HepG2 (cell line): ENCODE measurements at regions of chr1 and their contacts with region 1.

Region 1: GRCh38 chr1:40849801-40850592 is 12.2 kb downstream of the CITED4 start:
- DNase-seq: peak; percentile 43
- ATAC-seq: peak; percentile 85
- H3K4me3 ChIP-seq: no peak overlapping the region
- H3K27ac ChIP-seq: no peak overlapping the region
- H3K4me1 ChIP-seq: peaks cover 22% of the 10 kb centered on the region; the same call in 1 of the 2 replicates
- H3K27me3 ChIP-seq: peaks cover 0 to 24% of the 10 kb centered on the region in 2 experiments; a peak in 2 of 5 replicates
- CTCF ChIP-seq: peak; percentile 89
- EP300 ChIP-seq: no peak
- POLR2A ChIP-seq: no peak
- RAD21 ChIP-seq: peak; percentile 78

Region 2: GRCh38 chr1:40612345-40612831 is 237.6 kb before region 1 on chr1:
- CTCF ChIA-PET with region 1: interaction called, 7 read pairs
- POLR2A ChIA-PET with region 1: no interaction called
- in situ Hi-C with region 1: no loop called
- intact Hi-C with region 1: loop called (anchors 1 kb)
- DNase-seq: peak; percentile 55
- ATAC-seq: peak; percentile 95
- H3K4me3 ChIP-seq: peak overlapping the region in 1 of 3 experiments; percentile 40; a peak in 1 of 6 replicates
- H3K27ac ChIP-seq: no peak overlapping the region
- H3K4me1 ChIP-seq: peaks cover 5% of the 10 kb centered on the region; the same call in 1 of the 2 replicates
- H3K27me3 ChIP-seq: peaks cover 0 to 3% of the 10 kb centered on the region in 2 experiments; a peak in 1 of 5 replicates
- CTCF ChIP-seq: peak; percentile 93
- EP300 ChIP-seq: no peak
- POLR2A ChIP-seq: no peak
- RAD21 ChIP-seq: peak; percentile 74

Region 3: DNA sequence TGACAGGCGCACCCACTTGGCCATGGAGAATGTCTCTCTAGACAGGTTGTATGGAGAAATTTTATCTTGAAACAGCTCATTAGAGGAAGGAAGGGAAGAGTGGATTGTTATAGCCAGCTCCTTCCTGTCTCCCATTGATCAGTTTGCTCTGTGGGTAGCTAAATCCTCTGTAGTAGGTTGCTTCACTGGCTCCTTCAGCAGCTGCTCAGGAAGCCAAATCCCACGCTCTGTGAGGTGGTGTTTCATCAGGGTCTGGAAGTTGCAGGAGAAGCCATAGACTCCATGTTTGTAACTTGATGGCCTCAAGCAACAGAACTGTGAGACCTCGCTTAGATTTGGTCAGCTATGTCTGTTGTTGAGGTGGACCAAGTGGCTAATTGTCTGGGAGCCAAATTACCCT is 165.3 kb before region 1 on chr1:
- CTCF ChIA-PET with region 1: no interaction called
- POLR2A ChIA-PET with region 1: no interaction called
- in situ Hi-C with region 1: no loop called
- intact Hi-C with region 1: no loop called
- DNase-seq: no peak
- ATAC-seq: no peak
- H3K4me3 ChIP-seq: no peak overlapping the region
- H3K27ac ChIP-seq: no peak overlapping the region
- H3K4me1 ChIP-seq: peaks cover 11% of the 10 kb centered on the region
- H3K27me3 ChIP-seq: no peaks in the 10 kb centered on the region
- CTCF ChIP-seq: no peak
- EP300 ChIP-seq: no peak
- POLR2A ChIP-seq: no peak
- RAD21 ChIP-seq: no peak

Region 4: DNA sequence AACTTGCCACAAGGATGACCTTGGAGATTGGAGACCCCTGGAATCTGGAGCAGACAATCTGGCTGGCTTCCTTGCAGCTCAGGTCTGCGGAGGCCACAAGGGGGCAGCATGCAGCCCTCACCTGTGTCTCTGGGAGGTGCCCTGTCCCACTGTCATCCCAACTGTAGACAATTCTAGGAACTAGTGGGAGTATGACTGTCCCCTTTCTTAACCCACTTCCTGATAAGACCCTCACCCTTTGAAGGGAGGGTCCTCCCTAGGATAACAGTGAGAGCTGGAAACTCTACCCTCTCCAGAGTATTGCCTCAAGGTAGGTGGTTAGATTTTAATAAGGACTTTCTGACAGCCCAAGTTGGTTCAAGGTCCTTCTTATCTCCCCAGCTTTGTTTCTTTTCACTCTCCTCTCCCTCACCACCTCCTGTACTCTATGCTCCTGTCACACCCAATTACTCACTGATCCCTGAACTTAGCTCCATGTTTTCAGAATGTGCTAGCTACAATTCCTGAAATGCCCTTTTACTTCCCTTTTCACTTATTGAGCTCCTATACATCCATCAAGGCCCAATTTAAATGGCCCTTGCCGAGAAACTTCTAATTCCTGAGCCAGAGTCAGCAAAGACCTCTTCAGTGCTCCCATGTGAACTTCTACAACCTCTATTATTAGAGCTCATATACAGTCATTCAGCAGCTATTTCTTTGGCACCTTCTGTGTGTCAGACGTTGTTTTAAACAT is 75.6 kb before region 1 on chr1:
- CTCF ChIA-PET with region 1: interaction called, 5 read pairs
- POLR2A ChIA-PET with region 1: no interaction called
- in situ Hi-C with region 1: loop called (anchors 5 kb)
- intact Hi-C with region 1: loop called (anchors 5 kb)
- DNase-seq: peak; percentile 36
- ATAC-seq: peak; percentile 83
- H3K4me3 ChIP-seq: no peak overlapping the region
- H3K27ac ChIP-seq: peak overlapping the region; percentile 35
- H3K4me1 ChIP-seq: peaks cover 19% of the 10 kb centered on the region
- H3K27me3 ChIP-seq: no peaks in the 10 kb centered on the region
- CTCF ChIP-seq: peak; percentile 90
- EP300 ChIP-seq: no peak
- POLR2A ChIP-seq: no peak
- RAD21 ChIP-seq: peak; percentile 66

Region 5: GRCh38 chr1:40799351-40799867 is 50.6 kb before region 1 on chr1:
- CTCF ChIA-PET with region 1: no interaction called
- POLR2A ChIA-PET with region 1: no interaction called
- in situ Hi-C with region 1: no loop called
- intact Hi-C with region 1: loop called (anchors 10 kb)
- DNase-seq: no peak
- ATAC-seq: no peak
- H3K4me3 ChIP-seq: no peak overlapping the region
- H3K27ac ChIP-seq: no peak overlapping the region
- H3K4me1 ChIP-seq: peaks cover 42% of the 10 kb centered on the region
- H3K27me3 ChIP-seq: peaks cover 0 to 29% of the 10 kb centered on the region in 2 experiments; a peak in 4 of 5 replicates
- CTCF ChIP-seq: no peak
- EP300 ChIP-seq: no peak
- POLR2A ChIP-seq: no peak
- RAD21 ChIP-seq: no peak

Region 6: DNA sequence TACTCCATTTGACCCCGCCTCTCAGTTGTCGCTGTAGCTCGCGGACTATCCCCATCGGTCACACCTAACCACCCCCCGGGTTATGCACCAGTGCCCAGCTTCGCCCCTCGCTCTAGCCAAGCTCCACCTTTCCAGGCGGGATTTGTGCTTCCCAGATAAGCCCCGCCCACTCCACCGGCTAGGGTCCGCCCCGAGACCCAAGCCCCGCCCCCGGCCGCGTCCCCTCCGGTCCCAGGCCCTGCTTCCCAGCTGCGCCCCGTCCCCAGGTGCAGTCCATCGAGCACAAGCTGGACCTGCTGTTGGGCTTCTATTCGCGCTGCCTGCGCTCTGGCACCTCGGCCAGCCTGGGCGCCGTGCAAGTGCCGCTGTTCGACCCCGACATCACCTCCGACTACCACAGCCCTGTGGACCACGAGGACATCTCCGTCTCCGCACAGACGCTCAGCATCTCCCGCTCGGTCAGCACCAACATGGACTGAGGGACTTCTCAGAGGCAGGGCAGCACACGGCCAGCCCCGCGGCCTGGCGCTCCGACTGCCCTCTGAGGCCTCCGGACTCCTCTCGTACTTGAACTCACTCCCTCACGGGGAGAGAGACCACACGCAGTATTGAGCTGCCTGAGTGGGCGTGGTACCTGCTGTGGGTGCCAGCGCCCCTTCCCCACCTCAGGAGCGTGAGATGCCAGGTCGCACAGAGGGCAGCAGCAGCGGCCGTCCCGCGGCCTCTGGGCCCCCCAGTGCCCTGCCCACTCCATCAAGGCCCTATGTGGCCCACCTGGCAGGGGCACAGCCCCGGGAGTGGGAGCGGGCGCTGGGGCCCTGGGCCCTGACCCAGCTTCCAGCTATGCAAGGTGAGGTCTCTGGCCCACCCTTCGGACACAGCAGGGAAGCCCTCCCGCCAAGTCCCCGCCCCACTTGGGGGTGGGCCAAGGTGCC is 11.7 kb before region 1 on chr1:
- CTCF ChIA-PET with region 1: no interaction called
- POLR2A ChIA-PET with region 1: no interaction called
- in situ Hi-C with region 1: no loop called
- intact Hi-C with region 1: no loop called
- DNase-seq: no peak
- ATAC-seq: no peak
- H3K4me3 ChIP-seq: no peak overlapping the region
- H3K27ac ChIP-seq: no peak overlapping the region
- H3K4me1 ChIP-seq: peaks cover 9% of the 10 kb centered on the region; the same call in 1 of the 2 replicates
- H3K27me3 ChIP-seq: peaks cover 0 to 6% of the 10 kb centered on the region in 2 experiments; a peak in 1 of 5 replicates
- CTCF ChIP-seq: no peak
- EP300 ChIP-seq: no peak
- POLR2A ChIP-seq: no peak
- RAD21 ChIP-seq: no peak

Region 7: GRCh38 chr1:40951943-40952743 is 102.1 kb after region 1 on chr1:
- CTCF ChIA-PET with region 1: interaction called, 161 read pairs
- POLR2A ChIA-PET with region 1: interaction called, 3 read pairs
- in situ Hi-C with region 1: loop called (anchors 5 kb)
- intact Hi-C with region 1: loop called (anchors 1 kb)
- DNase-seq: peak; percentile 61
- ATAC-seq: peak; percentile 83
- H3K4me3 ChIP-seq: no peak overlapping the region; a peak in 1 of 6 replicates
- H3K27ac ChIP-seq: no peak overlapping the region
- H3K4me1 ChIP-seq: peaks cover 29% of the 10 kb centered on the region
- H3K27me3 ChIP-seq: peaks cover 0 to 15% of the 10 kb centered on the region in 2 experiments; a peak in 2 of 5 replicates
- CTCF ChIP-seq: peak; percentile 98
- EP300 ChIP-seq: no peak
- POLR2A ChIP-seq: no peak
- RAD21 ChIP-seq: peak; percentile 99

Region 8: DNA sequence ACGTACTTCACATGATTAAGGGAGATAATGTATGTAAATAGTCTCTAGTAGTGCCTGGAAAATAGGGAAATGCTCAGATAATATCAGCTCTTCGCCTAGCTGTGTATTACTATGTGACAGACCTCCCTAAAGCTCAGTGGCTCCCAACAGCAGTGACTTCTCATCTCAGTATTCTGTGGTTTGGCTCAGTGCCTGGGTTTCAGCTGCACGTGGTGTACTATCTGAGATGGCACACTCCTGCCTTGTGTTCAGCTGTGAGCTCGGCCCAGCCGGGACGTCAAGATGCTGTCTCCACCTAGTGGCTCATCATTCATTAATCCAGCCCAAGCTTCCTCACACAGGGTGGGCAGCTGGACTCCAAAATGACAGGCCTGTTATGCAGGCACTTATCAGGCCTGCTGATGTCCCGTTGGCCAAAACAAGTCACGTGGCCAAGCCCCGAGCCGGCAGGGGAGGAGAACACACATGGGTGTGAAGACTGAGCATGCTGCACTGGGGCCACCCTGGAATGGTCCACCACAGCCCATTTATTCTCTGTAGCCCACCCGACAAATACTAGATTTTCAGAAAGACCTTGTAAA is 153.7 kb after region 1 on chr1:
- CTCF ChIA-PET with region 1: interaction called, 3 read pairs
- POLR2A ChIA-PET with region 1: no interaction called
- in situ Hi-C with region 1: no loop called
- intact Hi-C with region 1: loop called (anchors 1 kb)
- DNase-seq: peak; percentile 87
- ATAC-seq: peak; percentile 97
- H3K4me3 ChIP-seq: no peak overlapping the region
- H3K27ac ChIP-seq: no peak overlapping the region
- H3K4me1 ChIP-seq: peaks cover 7% of the 10 kb centered on the region; the same call in 1 of the 2 replicates
- H3K27me3 ChIP-seq: no peaks in the 10 kb centered on the region
- CTCF ChIP-seq: peak; percentile 59
- EP300 ChIP-seq: no peak
- POLR2A ChIP-seq: no peak
- RAD21 ChIP-seq: no peak

Region 9: DNA sequence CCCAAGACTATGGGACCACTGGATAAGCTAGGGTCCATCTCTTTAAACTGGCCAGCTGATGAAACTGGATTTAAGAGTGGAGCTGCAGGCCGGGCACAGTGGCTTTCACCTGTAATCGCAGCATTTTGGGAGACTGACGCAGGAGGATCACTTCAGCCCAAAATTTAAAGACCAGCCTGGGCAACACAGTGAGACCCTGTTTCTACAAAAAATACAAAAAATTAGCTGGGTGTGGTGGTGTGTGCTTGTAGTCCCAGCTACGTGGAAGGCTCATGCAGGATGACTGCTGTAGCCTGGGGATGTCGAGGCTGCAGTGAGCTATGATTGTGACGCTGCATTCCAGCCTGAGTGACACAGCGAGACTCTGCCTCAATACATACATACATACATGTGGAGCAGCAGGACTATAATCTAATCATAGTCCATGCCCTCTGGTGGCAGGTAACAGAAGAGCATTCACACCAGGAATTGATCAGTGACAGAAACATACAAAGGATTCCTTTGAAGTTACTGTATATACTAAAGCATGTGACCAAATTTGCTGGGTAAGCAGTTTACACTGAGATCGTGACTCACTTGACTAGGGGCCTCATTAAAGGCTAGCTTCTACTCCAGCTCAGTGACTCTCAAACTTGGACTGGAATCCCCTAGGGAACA is 273.0 kb after region 1 on chr1:
- CTCF ChIA-PET with region 1: no interaction called
- POLR2A ChIA-PET with region 1: no interaction called
- in situ Hi-C with region 1: no loop called
- intact Hi-C with region 1: no loop called
- DNase-seq: peak; percentile 86
- ATAC-seq: peak; percentile 98
- H3K4me3 ChIP-seq: no peak overlapping the region
- H3K27ac ChIP-seq: peak overlapping the region; percentile 8
- H3K4me1 ChIP-seq: peaks cover 12% of the 10 kb centered on the region
- H3K27me3 ChIP-seq: no peaks in the 10 kb centered on the region
- CTCF ChIP-seq: peak; percentile 68
- EP300 ChIP-seq: no peak
- POLR2A ChIP-seq: no peak
- RAD21 ChIP-seq: no peak